ENCODE measurements at regions of chr4 and their contacts with region 1.

Region 1: GRCh38 chr4:110631584-110632505 is 9.0 kb upstream of the PITX2 start:
- DNase-seq: peak; percentile 76
- H3K4me3 ChIP-seq: peak overlapping the region in 1 of 3 experiments; percentile 27
- H3K27ac ChIP-seq: no peak overlapping the region
- H3K4me1 ChIP-seq: no peaks in the 10 kb centered on the region
- H3K27me3 ChIP-seq: peaks cover 91 to 92% of the 10 kb centered on the region in 2 experiments
- CTCF ChIP-seq: peak; percentile 84 to 91
- POLR2A ChIP-seq: no peak

Region 2: GRCh38 chr4:110654254-110654635 is 22.4 kb after region 1 on chr4:
- CTCF ChIA-PET with region 1: no interaction called
- POLR2A ChIA-PET with region 1: no interaction called
- dilution Hi-C with region 1: no loop called
- intact Hi-C with region 1: no loop called
- DNase-seq: no peak
- H3K4me3 ChIP-seq: no peak overlapping the region
- H3K27ac ChIP-seq: no peak overlapping the region
- H3K4me1 ChIP-seq: no peaks in the 10 kb centered on the region
- H3K27me3 ChIP-seq: peaks cover 2 to 5% of the 10 kb centered on the region in 2 experiments
- CTCF ChIP-seq: no peak
- POLR2A ChIP-seq: no peak

Region 3: GRCh38 chr4:110823251-110823650 is 191.4 kb after region 1 on chr4:
- CTCF ChIA-PET with region 1: no interaction called
- POLR2A ChIA-PET with region 1: no interaction called
- dilution Hi-C with region 1: no loop called
- intact Hi-C with region 1: no loop called
- DNase-seq: no peak
- H3K4me3 ChIP-seq: no peak overlapping the region
- H3K27ac ChIP-seq: no peak overlapping the region
- H3K4me1 ChIP-seq: no peaks in the 10 kb centered on the region
- H3K27me3 ChIP-seq: no peaks in the 10 kb centered on the region
- CTCF ChIP-seq: no peak
- POLR2A ChIP-seq: no peak

Region 4: DNA sequence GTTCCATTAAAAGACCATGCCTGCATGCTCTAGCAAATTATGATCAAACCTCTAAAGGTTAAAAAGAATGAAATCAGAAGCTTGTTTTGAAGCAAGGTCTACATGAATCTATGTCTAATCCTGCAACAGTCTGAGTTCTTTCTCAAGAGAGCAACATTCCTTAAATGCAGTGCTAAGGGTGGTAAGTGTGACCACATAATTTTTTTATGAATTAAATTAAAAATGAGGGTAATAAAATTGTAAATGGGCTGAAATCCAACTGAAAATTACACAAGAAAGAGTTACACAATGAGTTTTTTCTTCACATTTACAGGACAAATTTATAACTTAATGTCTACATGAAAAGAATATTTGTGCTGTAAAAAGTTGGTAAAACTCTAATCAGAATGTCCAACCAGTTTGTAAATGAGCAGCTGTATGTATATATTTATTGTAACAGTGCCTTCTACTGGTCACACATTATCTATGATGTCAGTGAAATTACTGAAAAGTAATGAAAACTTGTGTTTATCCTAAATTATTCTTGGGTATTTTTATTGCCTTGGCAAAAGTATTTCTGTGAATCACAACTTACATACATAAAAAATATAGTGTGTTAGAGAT is 327.3 kb after region 1 on chr4:
- CTCF ChIA-PET with region 1: interaction called, 5 read pairs
- POLR2A ChIA-PET with region 1: no interaction called
- dilution Hi-C with region 1: no loop called
- intact Hi-C with region 1: loop called (anchors 1 kb)
- DNase-seq: peak; percentile 22
- H3K4me3 ChIP-seq: no peak overlapping the region
- H3K27ac ChIP-seq: no peak overlapping the region
- H3K4me1 ChIP-seq: no peaks in the 10 kb centered on the region
- H3K27me3 ChIP-seq: no peaks in the 10 kb centered on the region
- CTCF ChIP-seq: peak in 1 of 2 donors; percentile 16
- POLR2A ChIP-seq: no peak

Region 5: GRCh38 chr4:110970642-110971041 is 338.8 kb after region 1 on chr4:
- CTCF ChIA-PET with region 1: interaction called, 3 read pairs
- POLR2A ChIA-PET with region 1: no interaction called
- dilution Hi-C with region 1: no loop called
- intact Hi-C with region 1: loop called (anchors 1 kb)
- DNase-seq: peak; percentile 6
- H3K4me3 ChIP-seq: no peak overlapping the region
- H3K27ac ChIP-seq: no peak overlapping the region
- H3K4me1 ChIP-seq: no peaks in the 10 kb centered on the region
- H3K27me3 ChIP-seq: peaks cover 0 to 4% of the 10 kb centered on the region in 2 experiments
- CTCF ChIP-seq: peak; percentile 30 to 44
- POLR2A ChIP-seq: no peak

Region 6: DNA sequence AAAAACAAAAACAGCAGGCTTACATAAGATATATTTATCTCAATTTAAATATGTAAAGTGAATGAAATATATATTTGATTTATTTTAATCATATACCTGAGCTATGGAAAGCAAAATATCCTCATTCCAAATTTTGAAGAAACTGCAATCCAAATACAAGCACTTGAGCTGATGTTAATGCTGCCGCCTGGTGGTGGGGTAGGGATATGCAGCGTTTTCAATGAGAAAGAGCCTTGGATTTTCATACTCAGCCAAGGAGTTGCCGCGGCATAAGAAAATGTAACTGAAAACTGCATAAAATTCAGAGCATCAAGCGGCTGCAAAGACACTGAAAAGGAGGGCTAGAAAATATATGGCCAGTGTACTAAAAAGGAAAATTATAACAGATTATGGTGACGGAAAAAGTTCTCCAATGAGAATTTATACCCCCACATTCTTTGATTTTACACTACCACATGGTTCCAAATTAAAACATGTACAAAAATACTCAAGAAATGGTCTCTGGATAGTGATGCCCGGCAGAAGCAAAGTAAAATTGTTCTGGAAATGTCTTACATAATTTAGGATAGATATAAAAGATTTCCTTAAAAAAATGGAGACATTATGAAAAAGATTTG is 651.3 kb after region 1 on chr4:
- CTCF ChIA-PET with region 1: interaction called, 12 read pairs
- POLR2A ChIA-PET with region 1: no interaction called
- dilution Hi-C with region 1: no loop called
- intact Hi-C with region 1: loop called (anchors 1 kb)
- DNase-seq: peak; percentile 58
- H3K4me3 ChIP-seq: no peak overlapping the region
- H3K27ac ChIP-seq: no peak overlapping the region
- H3K4me1 ChIP-seq: no peaks in the 10 kb centered on the region
- H3K27me3 ChIP-seq: no peaks in the 10 kb centered on the region
- CTCF ChIP-seq: peak; percentile 77 to 85
- POLR2A ChIP-seq: no peak

Region 7: GRCh38 chr4:111475001-111475400 is 843.2 kb after region 1 on chr4:
- CTCF ChIA-PET with region 1: no interaction called
- POLR2A ChIA-PET with region 1: no interaction called
- dilution Hi-C with region 1: no loop called
- intact Hi-C with region 1: loop called (anchors 2 kb)
- DNase-seq: no peak
- H3K4me3 ChIP-seq: no peak overlapping the region
- H3K27ac ChIP-seq: no peak overlapping the region
- H3K4me1 ChIP-seq: no peaks in the 10 kb centered on the region
- H3K27me3 ChIP-seq: no peaks in the 10 kb centered on the region
- CTCF ChIP-seq: no peak
- POLR2A ChIP-seq: no peak

Region 8: GRCh38 chr4:111631215-111631999 is 999.6 kb after region 1 on chr4:
- CTCF ChIA-PET with region 1: interaction called, 78 read pairs
- POLR2A ChIA-PET with region 1: no interaction called
- dilution Hi-C with region 1: no loop called
- intact Hi-C with region 1: loop called (anchors 1 kb)
- DNase-seq: peak; percentile 27
- H3K4me3 ChIP-seq: no peak overlapping the region
- H3K27ac ChIP-seq: no peak overlapping the region
- H3K4me1 ChIP-seq: no peaks in the 10 kb centered on the region
- H3K27me3 ChIP-seq: peaks cover 0 to 8% of the 10 kb centered on the region in 2 experiments
- CTCF ChIP-seq: peak; percentile 24 to 48
- POLR2A ChIP-seq: no peak

Region 9: GRCh38 chr4:111854494-111855087 is 1222.7 kb after region 1 on chr4:
- CTCF ChIA-PET with region 1: interaction called, 9 read pairs
- POLR2A ChIA-PET with region 1: no interaction called
- dilution Hi-C with region 1: no loop called
- intact Hi-C with region 1: loop called (anchors 1 kb)
- DNase-seq: peak; percentile 39
- H3K4me3 ChIP-seq: no peak overlapping the region
- H3K27ac ChIP-seq: no peak overlapping the region
- H3K4me1 ChIP-seq: no peaks in the 10 kb centered on the region
- H3K27me3 ChIP-seq: peaks cover 0 to 8% of the 10 kb centered on the region in 2 experiments
- CTCF ChIP-seq: peak; percentile 34 to 49
- POLR2A ChIP-seq: no peak